Dorsolateral prefrontal cortex (tissue), 120 donors: ENCODE measurements at regions of chr14 and their contacts with region 1.

Region 1: GRCh38 chr14:100662879-100663760 is 63.6 kb upstream of the DLK1 start:
- DNase-seq: peak in 8 of 10 donors; percentile 57 to 81 (median 70)
- H3K4me3 ChIP-seq: no peak overlapping the region
- H3K27ac ChIP-seq: no peak overlapping the region
- H3K27me3 ChIP-seq: peaks cover 0 to 12% (median 0%) of the 10 kb centered on the region in 45 donors
- CTCF ChIP-seq: peak; percentile 84 to 100 (median 93)

Region 2: GRCh38 chr14:100221533-100222223 is 441.4 kb before region 1 on chr14:
- intact Hi-C with region 1: no loop called
- DNase-seq: no peak
- H3K4me3 ChIP-seq: peak overlapping the region in 57 of 59 donors; percentile 6 to 61 (median 40)
- H3K27ac ChIP-seq: peak overlapping the region in 13 of 59 donors; percentile 11 to 57 (median 26)
- H3K27me3 ChIP-seq: no peaks in the 10 kb centered on the region
- CTCF ChIP-seq: no peak

Region 3: GRCh38 chr14:100828031-100828769 is 165.1 kb after region 1 on chr14:
- intact Hi-C with region 1: loop called (anchors 2 to 5 kb)
- DNase-seq: peak in 2 of 10 donors; percentile 54 to 57
- H3K4me3 ChIP-seq: peak overlapping the region in 58 of 59 donors; percentile 21 to 74 (median 53)
- H3K27ac ChIP-seq: no peak overlapping the region
- H3K27me3 ChIP-seq: peaks cover 0 to 39% (median 0%) of the 10 kb centered on the region in 45 donors
- CTCF ChIP-seq: peak; percentile 15 to 70 (median 50)

Region 4: GRCh38 chr14:100904307-100905087 is 241.4 kb after region 1 on chr14:
- intact Hi-C with region 1: no loop called
- DNase-seq: no peak
- H3K4me3 ChIP-seq: peak overlapping the region in 35 of 59 donors; percentile 3 to 51 (median 29)
- H3K27ac ChIP-seq: peak overlapping the region in 3 of 59 donors; percentile 1 to 20 (median 11)
- H3K27me3 ChIP-seq: peaks cover 0 to 86% (median 32%) of the 10 kb centered on the region in 45 donors
- CTCF ChIP-seq: peak in 7 of 56 donors; percentile 9 to 29 (median 17)

Region 5: GRCh38 chr14:101230161-101230850 is 567.2 kb after region 1 on chr14:
- intact Hi-C with region 1: loop called in 1 of 2 experiments (anchors 5 kb)
- DNase-seq: peak in 1 of 10 donors; percentile 16
- H3K4me3 ChIP-seq: no peak overlapping the region
- H3K27ac ChIP-seq: no peak overlapping the region
- H3K27me3 ChIP-seq: no peaks in the 10 kb centered on the region
- CTCF ChIP-seq: no peak

Region 6: GRCh38 chr14:101628471-101628966 is 965.4 kb after region 1 on chr14:
- intact Hi-C with region 1: loop called (anchors 5 to 10 kb)
- DNase-seq: peak; percentile 64 to 86 (median 76)
- H3K4me3 ChIP-seq: peak overlapping the region in 57 of 59 donors; percentile 6 to 61 (median 40)
- H3K27ac ChIP-seq: peak overlapping the region in 21 of 59 donors; percentile 4 to 78 (median 41)
- H3K27me3 ChIP-seq: no peaks in the 10 kb centered on the region
- CTCF ChIP-seq: peak; percentile 97 to 100 (median 99)